Stomach (tissue), 19 donors: ENCODE measurements at regions of chr1 and their contacts with region 1.

Region 1: GRCh38 chr1:183915625-183916510 is 110.9 kb downstream of the RGL1 start:
- DNase-seq: peak; percentile 63 to 95
- H3K4me3 ChIP-seq: no peak overlapping the region
- H3K27ac ChIP-seq: peak overlapping the region in 3 of 5 donors; percentile 61 to 74 (median 65)
- H3K4me1 ChIP-seq: peaks cover 0 to 33% (median 12%) of the 10 kb centered on the region in 4 donors
- H3K27me3 ChIP-seq: no peaks in the 10 kb centered on the region
- CTCF ChIP-seq: peak in 5 of 7 experiments; percentile 46 to 92 (median 77)
- EP300 ChIP-seq: no peak
- POLR2A ChIP-seq: no peak

Region 2: GRCh38 chr1:183652547-183653461 is 263.1 kb before region 1 on chr1 and contains the start of gene APOBEC4:
- intact Hi-C with region 1: loop called (anchors 5 kb)
- DNase-seq: peak in 1 of 2 donors; percentile 90
- H3K4me3 ChIP-seq: no peak within 1 kb of the TSS
- H3K27ac ChIP-seq: peak within 1 kb of the TSS in 2 of 5 donors; percentile 27 to 43
- H3K4me1 ChIP-seq: peaks cover 8 to 44% (median 21%) of the 10 kb centered on the region in 4 donors
- H3K27me3 ChIP-seq: no peaks in the 10 kb centered on the region
- CTCF ChIP-seq: no peak
- EP300 ChIP-seq: no peak
- POLR2A ChIP-seq: no peak
- total RNA-seq, gene APOBEC4: not detected

Region 3: DNA sequence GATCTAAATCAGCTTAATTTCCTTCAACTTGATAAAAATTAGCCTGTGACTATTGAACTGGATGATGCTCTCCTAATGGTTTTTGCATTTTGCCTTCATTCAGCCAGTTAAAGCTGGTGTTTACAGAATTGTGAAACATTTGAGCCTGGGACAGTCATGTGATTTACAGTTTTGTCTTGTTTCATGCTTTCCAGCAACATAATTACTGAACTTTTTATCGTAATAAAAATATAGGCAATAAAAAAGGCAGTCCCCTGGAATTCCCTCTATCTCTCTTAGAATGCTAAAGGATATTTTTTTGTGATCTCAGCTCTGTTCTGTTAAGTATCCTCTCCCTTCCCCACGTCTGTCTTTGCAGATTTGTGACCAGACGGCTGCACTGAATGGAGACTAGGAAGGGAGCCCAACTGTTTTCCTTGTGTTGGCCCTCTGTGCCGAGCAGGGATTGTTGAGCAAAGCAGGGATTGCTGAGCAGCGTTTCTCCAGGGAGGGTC is 181.3 kb before region 1 on chr1:
- intact Hi-C with region 1: no loop called
- DNase-seq: peak in 1 of 2 donors; percentile 89
- H3K4me3 ChIP-seq: no peak overlapping the region
- H3K27ac ChIP-seq: peak overlapping the region in 2 of 5 donors; percentile 11 to 29
- H3K4me1 ChIP-seq: peaks cover 0 to 31% (median 12%) of the 10 kb centered on the region in 4 donors
- H3K27me3 ChIP-seq: no peaks in the 10 kb centered on the region
- CTCF ChIP-seq: no peak
- EP300 ChIP-seq: no peak
- POLR2A ChIP-seq: no peak